GM12878 (cell line): ENCODE measurements at regions of chr7 and their contacts with region 1.

Region 1: DNA sequence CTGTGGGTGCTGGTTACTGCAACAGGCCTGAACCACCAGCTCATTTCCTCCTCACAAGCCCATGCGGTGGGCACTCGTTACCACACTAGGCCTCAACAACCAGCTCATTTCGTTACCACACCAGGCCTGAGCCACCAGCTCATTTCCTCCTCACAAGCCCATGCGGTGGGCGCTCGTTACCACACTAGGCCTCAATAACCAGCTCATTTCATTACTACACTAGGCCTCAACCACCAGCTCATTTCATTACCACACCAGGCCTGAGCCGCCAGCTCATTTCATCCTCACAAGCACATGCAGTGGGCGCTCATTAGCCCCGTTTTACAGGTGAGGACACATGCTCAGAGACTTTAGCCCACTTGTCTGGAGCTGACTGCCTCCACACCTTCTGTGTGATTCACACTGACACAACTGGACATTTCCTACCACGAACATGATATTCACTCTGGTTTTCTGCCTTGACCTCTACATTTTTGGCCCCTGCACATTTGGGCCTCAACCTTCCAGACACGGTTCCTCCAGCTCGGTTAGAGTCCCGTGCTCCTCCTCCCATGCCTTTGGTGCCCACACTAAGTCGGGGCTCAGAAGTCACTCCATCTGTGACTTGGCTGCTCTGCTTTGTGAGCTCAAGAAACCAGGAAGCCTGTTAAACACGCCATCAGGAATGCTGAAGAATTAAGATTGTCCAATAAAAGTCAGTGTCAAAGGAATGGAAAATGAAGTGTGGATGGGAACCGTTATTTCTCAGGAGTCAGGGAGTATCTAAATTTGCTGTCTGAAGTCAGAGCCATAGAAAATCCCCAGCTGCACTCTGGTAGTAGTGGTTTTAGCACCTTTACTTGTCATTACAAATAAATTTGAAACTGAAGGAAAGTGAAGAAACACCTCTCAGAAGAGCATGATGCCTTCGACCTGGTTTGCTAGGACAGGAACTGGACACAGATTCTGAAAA is 55.8 kb upstream of the LANCL2 start:
- DNase-seq: peak; percentile 99
- ATAC-seq: peak; percentile 89
- H3K4me3 ChIP-seq: no peak overlapping the region
- H3K27ac ChIP-seq: peak overlapping the region; percentile 74
- H3K4me1 ChIP-seq: peaks cover 52% of the 10 kb centered on the region
- H3K27me3 ChIP-seq: no peaks in the 10 kb centered on the region
- CTCF ChIP-seq: no peak
- EP300 ChIP-seq: peak; percentile 97 to 99
- POLR2A ChIP-seq: no peak; the same call in 1 of the 2 replicates
- RAD21 ChIP-seq: no peak

Region 2: DNA sequence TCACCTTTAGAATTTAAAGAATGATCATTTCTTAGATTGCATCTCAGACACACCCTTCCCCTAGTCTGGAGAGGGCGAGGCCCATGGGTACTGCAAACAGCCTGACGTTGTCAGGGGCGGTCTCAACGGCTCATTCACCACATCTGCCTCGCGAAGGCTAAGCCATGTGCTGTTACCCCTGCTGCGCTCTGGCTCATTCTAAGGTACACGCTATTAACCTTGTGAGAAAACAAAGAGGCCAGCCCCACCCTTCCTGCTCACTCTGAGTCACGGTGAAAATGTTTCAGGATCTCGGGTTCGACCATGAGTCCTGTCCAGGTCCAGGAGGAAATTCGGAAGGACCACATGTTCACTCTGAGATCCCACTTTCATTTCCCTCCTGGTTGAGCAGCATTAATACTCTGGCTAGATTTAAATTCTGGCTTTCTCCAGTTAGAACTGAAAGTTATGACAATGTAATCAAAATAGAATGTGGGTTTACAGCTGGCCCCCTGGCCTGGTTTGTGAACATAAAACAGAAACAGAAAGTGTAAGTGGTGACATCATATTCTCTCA is 235.3 kb before region 1 on chr7:
- CTCF ChIA-PET with region 1: interaction called, 3 read pairs
- POLR2A ChIA-PET with region 1: no interaction called
- RAD21 ChIA-PET with region 1: interaction called, 11 read pairs
- SMC1A ChIA-PET with region 1: interaction called, 6 read pairs
- in situ Hi-C with region 1: no loop called
- intact Hi-C with region 1: no loop called
- DNase-seq: peak; percentile 91
- ATAC-seq: peak; percentile 94
- H3K4me3 ChIP-seq: no peak overlapping the region
- H3K27ac ChIP-seq: peak overlapping the region; percentile 77
- H3K4me1 ChIP-seq: peaks cover 24% of the 10 kb centered on the region
- H3K27me3 ChIP-seq: no peaks in the 10 kb centered on the region
- CTCF ChIP-seq: no peak
- EP300 ChIP-seq: peak in 1 of 2 experiments; percentile 54; a peak in 1 of 4 replicates
- POLR2A ChIP-seq: peak; percentile 64
- RAD21 ChIP-seq: no peak

Region 3: DNA sequence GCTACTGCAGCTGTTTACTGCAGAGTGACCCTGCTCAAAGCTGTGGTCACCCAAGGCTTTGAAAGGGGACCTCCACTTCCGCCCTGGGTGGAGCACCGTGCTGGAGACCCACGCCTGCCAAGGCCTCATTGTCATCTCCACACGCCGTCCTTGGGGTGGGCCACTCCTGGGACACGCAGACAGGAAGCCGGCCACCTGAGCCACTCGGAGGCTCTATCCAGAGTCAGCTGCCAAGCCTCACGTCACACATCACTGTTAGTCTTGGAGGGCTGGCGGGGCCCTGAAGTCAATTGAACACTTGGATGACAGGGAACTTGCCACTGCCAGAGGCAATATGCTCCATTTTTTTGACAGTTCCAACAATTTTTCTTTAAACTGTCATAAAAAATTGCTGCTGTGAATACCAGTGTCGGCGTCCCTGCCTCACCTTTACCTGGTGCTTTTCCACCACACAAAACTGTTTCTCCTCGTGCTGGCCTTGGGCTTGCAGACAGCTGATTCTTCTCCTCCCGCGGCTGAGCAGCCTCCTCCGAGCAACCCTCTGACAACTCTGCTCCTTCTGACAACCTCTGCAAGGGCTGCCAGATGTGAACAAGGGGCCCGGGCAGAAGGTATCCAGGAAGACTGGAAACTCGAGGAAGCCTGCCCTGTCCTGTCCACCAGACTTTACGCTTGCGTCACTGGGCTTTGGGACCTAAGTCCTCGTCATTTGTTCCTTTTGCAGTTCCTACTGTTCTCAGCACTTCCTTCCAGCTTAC is 208.6 kb before region 1 on chr7:
- CTCF ChIA-PET with region 1: no interaction called
- POLR2A ChIA-PET with region 1: no interaction called
- RAD21 ChIA-PET with region 1: no interaction called
- SMC1A ChIA-PET with region 1: no interaction called
- in situ Hi-C with region 1: no loop called
- intact Hi-C with region 1: no loop called
- DNase-seq: no peak
- ATAC-seq: peak; percentile 35
- H3K4me3 ChIP-seq: no peak overlapping the region
- H3K27ac ChIP-seq: no peak overlapping the region
- H3K4me1 ChIP-seq: no peaks in the 10 kb centered on the region
- H3K27me3 ChIP-seq: peaks cover 0 to 1% of the 10 kb centered on the region in 2 experiments; a peak in 1 of 4 replicates
- CTCF ChIP-seq: no peak
- EP300 ChIP-seq: no peak
- POLR2A ChIP-seq: no peak
- RAD21 ChIP-seq: no peak

Region 4: DNA sequence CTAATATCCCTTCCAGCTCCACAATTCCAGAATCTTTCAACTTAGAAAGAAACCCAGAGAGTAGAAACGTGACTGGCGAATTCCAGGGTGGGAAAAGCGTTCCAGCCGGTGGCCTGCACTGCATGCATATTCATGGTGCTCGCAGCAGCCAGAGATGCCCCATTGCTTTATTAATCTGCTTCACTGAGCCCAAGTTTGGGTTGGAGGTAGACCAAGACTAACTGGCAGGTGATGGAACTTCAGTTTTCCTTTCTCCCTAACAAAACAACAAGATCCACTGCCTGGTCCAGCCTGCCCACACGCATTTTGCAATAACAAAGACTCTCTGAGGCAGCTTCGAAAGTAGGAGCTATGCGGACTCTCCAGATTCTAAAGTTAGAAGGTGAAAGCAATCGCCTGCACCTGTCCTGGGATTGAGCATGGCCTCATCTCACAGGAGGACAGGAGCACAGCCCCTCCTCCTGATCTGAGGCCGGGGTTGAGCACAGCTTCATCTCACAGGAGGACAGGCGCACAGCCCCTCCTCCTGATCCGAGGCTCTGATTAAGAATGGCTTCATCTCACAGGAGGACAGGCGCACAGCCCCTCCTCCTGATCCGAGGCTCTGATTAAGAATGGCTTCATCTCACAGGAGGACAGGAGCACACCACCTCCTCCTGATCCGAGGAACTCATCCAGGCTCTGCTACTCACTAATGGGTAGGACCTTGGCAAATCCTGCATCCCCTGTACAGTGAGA is 72.0 kb before region 1 on chr7:
- CTCF ChIA-PET with region 1: no interaction called
- POLR2A ChIA-PET with region 1: no interaction called
- RAD21 ChIA-PET with region 1: no interaction called
- SMC1A ChIA-PET with region 1: no interaction called
- in situ Hi-C with region 1: no loop called
- intact Hi-C with region 1: no loop called
- DNase-seq: no peak
- ATAC-seq: no peak
- H3K4me3 ChIP-seq: no peak overlapping the region
- H3K27ac ChIP-seq: no peak overlapping the region
- H3K4me1 ChIP-seq: no peaks in the 10 kb centered on the region
- H3K27me3 ChIP-seq: peaks cover 2 to 8% of the 10 kb centered on the region in 2 experiments; a peak in 3 of 4 replicates
- CTCF ChIP-seq: no peak
- EP300 ChIP-seq: no peak
- POLR2A ChIP-seq: no peak
- RAD21 ChIP-seq: no peak

Region 5: GRCh38 chr7:55325371-55325792 is 16.1 kb after region 1 on chr7:
- CTCF ChIA-PET with region 1: interaction called, 5 read pairs
- POLR2A ChIA-PET with region 1: no interaction called
- RAD21 ChIA-PET with region 1: interaction called, 3 read pairs
- SMC1A ChIA-PET with region 1: interaction called, 11 read pairs
- in situ Hi-C with region 1: no loop called
- intact Hi-C with region 1: no loop called
- DNase-seq: no peak
- ATAC-seq: no peak
- H3K4me3 ChIP-seq: no peak overlapping the region
- H3K27ac ChIP-seq: no peak overlapping the region
- H3K4me1 ChIP-seq: no peaks in the 10 kb centered on the region
- H3K27me3 ChIP-seq: no peaks in the 10 kb centered on the region
- CTCF ChIP-seq: no peak
- EP300 ChIP-seq: no peak
- POLR2A ChIP-seq: no peak
- RAD21 ChIP-seq: no peak

Region 6: DNA sequence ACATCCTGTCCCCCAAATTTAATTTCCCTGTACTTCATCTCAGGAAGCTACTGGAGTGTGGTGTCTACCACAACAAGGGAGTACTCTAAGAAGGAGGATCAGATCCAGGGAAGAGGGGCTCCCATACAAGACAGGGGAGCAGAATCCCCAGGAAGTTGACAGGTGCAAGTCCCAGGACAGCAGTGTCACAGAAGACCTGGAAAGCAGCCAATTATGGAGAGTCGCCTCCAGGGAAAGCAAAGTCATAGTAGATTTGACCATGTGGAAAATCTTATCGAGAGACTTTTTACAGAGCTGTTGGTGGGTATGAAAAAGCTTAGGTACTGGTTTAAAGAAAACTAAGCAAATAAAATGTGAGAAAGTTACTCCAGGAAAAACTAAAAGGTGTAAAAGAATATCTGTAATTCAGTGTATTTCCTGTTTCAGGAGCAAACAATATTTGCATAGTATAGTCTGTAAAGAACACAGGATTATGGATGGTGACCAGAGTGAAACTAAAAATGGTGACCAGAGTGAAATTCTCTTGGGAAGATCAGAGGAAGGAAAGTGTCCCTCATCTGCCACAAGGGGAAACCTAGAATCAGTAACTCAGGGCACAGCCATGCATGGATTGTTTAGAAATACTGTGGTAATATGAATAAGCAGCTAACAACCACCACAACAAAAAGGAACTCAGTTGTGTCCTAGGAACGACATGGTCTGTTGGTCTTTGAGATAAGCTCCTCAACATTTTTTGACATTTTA is 100.3 kb after region 1 on chr7:
- CTCF ChIA-PET with region 1: interaction called, 7 read pairs
- POLR2A ChIA-PET with region 1: interaction called, 4 read pairs
- RAD21 ChIA-PET with region 1: interaction called, 4 read pairs
- SMC1A ChIA-PET with region 1: interaction called, 13 read pairs
- in situ Hi-C with region 1: no loop called
- intact Hi-C with region 1: no loop called
- DNase-seq: peak; percentile 1
- ATAC-seq: peak; percentile 78
- H3K4me3 ChIP-seq: no peak overlapping the region
- H3K27ac ChIP-seq: no peak overlapping the region
- H3K4me1 ChIP-seq: no peaks in the 10 kb centered on the region
- H3K27me3 ChIP-seq: no peaks in the 10 kb centered on the region
- CTCF ChIP-seq: 0 out of 6 replicates have a peak, but pooled peaks of 1 of the 3 experiments have one; percentile 3
- EP300 ChIP-seq: no peak
- POLR2A ChIP-seq: no peak
- RAD21 ChIP-seq: no peak

Region 7: DNA sequence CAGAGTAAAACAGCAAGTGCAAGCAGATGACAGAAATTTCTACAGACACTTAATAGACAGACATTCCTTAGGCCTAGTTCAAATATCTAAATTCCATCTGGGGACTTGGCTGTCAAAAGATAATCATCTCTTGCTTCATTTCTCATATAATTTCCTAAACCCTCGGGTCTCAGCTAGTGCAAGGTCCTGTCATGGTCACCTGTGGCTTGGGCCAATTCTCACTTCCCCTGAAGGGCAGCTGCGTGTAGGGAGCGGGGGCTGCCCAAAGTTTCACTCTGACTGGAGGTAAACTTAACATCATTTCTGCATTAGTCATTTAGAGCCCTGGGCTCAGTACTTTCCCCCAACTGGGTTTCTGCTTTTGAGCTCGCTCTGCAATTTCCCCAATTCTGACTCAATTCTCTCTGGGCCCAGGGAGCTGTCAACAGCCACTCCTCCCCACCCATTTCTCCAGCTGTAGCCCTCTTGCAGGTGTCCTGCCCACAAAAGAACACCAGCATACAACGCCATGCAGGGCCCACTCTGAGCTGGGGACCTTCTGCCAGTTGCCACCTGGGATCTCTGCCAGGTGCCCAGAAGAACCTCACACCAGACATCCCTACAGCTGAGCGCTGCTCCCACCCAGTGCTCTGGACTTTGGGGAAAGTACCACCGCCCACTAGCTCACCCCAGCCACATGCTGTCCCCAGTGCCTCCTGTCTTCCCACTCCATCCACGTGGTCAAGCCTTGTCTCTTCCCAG is 225.0 kb after region 1 on chr7:
- CTCF ChIA-PET with region 1: interaction called, 32 read pairs
- POLR2A ChIA-PET with region 1: interaction called, 17 read pairs
- RAD21 ChIA-PET with region 1: interaction called, 68 read pairs
- SMC1A ChIA-PET with region 1: interaction called, 61 read pairs
- in situ Hi-C with region 1: no loop called
- intact Hi-C with region 1: loop called (anchors 1 kb)
- DNase-seq: peak; percentile 99
- ATAC-seq: peak; percentile 68
- H3K4me3 ChIP-seq: peak overlapping the region; percentile 78
- H3K27ac ChIP-seq: peak overlapping the region; percentile 100
- H3K4me1 ChIP-seq: peaks cover 84% of the 10 kb centered on the region
- H3K27me3 ChIP-seq: no peaks in the 10 kb centered on the region
- CTCF ChIP-seq: no peak
- EP300 ChIP-seq: peak; percentile 100
- POLR2A ChIP-seq: peak; percentile 85
- RAD21 ChIP-seq: peak; percentile 36

Region 8: DNA sequence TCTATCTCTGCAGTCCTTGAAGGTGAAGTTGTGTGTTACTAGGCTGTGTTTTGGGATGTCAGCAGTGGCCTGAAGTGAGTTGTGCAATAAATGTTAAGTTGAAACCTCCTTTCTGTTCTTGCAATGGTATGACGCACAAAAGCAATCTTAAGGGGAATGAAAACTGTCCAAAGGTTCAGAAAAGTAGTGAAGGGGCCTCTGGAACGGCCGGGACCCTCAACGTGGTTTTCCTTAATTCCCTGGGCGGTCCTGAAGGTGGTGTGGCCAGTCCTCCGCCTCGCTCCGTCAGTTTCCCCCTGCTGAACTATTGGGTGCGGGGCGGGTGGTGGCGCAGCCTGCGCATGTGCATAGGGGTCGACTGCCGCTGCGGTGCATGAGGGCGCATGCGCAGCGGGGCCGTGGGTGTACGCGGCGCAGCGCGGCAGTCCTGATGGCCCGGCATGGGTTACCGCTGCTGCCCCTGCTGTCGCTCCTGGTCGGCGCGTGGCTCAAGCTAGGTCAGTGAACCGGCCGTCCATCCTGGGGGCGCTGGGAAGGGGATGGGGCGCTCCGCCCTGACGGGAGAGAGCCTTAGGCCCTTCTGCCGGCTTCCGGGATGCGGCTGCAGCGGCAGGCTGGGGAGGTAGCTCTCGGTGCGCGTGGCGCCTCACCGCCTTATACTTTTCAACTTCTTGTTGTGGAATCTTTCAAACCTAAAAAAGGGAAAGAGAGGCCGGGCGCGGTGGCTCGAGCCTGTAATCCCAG is 754.7 kb after region 1 on chr7 and contains the start of gene SUMF2:
- CTCF ChIA-PET with region 1: no interaction called
- POLR2A ChIA-PET with region 1: no interaction called
- RAD21 ChIA-PET with region 1: no interaction called
- SMC1A ChIA-PET with region 1: interaction called, 3 read pairs
- in situ Hi-C with region 1: no loop called
- intact Hi-C with region 1: loop called (anchors 5 kb)
- DNase-seq: peak; percentile 78
- ATAC-seq: peak; percentile 95
- H3K4me3 ChIP-seq: peak within 1 kb of the TSS; percentile 72
- H3K27ac ChIP-seq: peak within 1 kb of the TSS; percentile 71
- H3K4me1 ChIP-seq: peaks cover 6% of the 10 kb centered on the region; the same call in 1 of the 2 replicates
- H3K27me3 ChIP-seq: no peaks in the 10 kb centered on the region
- CTCF ChIP-seq: peak in 2 of 3 experiments; percentile 12 to 32; a peak in 2 of 6 replicates
- EP300 ChIP-seq: no peak
- POLR2A ChIP-seq: peak; percentile 99
- RAD21 ChIP-seq: no peak
- polyA plus RNA-seq, gene SUMF2: 39.9 to 62.4 TPM